Common myeloid progenitor, CD34-positive (primary cell): ENCODE measurements at regions of chr1 and their contacts with region 1.

Region 1: DNA sequence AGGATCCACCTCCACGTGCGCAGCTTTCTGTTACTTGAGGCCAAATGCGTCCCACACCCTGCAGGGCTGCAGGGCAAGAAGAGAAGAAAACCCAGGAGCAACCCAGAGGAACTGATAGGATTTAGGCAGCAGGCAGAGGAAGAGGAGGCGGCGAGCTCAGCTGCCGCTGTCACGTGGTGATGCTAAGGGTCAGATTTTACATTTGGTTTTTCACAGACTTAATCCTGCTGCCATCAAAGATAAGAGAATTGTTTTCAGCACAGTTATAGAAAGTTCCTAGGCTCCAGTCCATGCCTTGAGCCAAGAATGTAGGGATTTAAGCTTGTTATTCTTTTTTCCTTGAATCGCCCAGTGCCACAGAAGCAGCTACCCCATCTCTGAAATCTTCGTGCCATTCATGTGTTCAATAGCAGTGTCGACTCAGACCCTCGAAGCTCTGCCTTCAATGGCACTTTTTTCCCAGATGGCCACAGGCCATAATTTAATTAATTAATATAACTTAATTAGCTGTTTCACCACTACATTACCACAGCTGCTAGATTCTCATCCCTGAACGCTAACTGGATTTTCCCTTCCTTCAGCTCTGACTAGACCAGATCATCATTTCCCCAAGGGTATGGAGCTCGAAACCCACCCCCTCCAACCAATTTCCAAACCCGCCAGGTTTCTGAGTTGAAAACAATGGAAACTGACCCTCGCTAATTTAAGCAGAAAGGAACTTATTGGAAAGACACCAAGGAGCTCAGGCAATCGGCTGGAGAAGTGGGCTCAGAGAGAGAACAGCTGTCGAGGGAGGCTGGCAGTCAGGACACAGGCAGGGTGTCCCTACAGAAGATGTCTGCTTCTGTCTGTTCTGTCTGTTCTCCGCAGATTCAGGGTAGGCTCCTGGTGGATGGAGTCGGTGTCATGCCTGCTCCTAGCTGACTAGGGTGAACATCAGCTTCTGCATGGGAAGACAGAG is 36.2 kb downstream of the LDLRAP1 start:
- DNase-seq: no peak
- H3K4me3 ChIP-seq: no peak overlapping the region
- H3K27ac ChIP-seq: no peak overlapping the region
- H3K4me1 ChIP-seq: peaks cover 0 to 9% (median 2%) of the 10 kb centered on the region in 4 experiments
- H3K27me3 ChIP-seq: peaks cover 0 to 1% (median 0%) of the 10 kb centered on the region in 5 experiments

Region 2: GRCh38 chr1:25556791-25557476 is 22.6 kb before region 1 on chr1:
- CTCF ChIA-PET with region 1: interaction called, 11 read pairs
- POLR2A ChIA-PET with region 1: no interaction called
- DNase-seq: peak in 2 of 3 donors; percentile 78 to 79
- H3K4me3 ChIP-seq: peak overlapping the region in 1 of 7 experiments; percentile 4
- H3K27ac ChIP-seq: no peak overlapping the region
- H3K4me1 ChIP-seq: peaks cover 22 to 89% (median 71%) of the 10 kb centered on the region in 4 experiments
- H3K27me3 ChIP-seq: no peaks in the 10 kb centered on the region

Region 3: GRCh38 chr1:25771246-25772114 is 191.9 kb after region 1 on chr1:
- CTCF ChIA-PET with region 1: no interaction called
- POLR2A ChIA-PET with region 1: no interaction called
- DNase-seq: peak; percentile 65 to 94 (median 92)
- H3K4me3 ChIP-seq: peak overlapping the region in 3 of 7 experiments; percentile 32 to 51 (median 51)
- H3K27ac ChIP-seq: no peak overlapping the region
- H3K4me1 ChIP-seq: peaks cover 8 to 78% (median 61%) of the 10 kb centered on the region in 4 experiments
- H3K27me3 ChIP-seq: no peaks in the 10 kb centered on the region